Left cardiac atrium (tissue), 4 donors: ENCODE measurements at regions of chrX and their contacts with region 1.

Region 1: DNA sequence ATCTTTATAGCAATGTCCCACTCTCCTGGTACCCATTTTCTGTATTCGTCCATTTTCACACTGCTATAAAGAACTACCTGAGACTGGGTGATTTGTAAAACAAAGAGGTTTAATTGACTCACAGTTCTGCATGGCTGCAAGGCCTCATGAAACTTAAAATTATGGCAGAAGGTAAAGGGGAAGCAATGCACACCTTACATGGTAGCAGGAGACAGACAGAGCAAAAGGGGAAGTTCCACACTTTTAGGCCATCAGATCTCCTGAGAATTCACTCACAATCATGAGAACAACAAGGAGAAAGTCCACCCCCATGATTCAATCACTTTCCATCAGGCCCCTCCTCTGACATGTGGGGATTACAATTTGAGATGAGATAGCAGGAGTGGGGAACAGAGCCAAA is 49.7 kb downstream of the TMLHE start:
- DNase-seq: no peak
- ATAC-seq: no peak

Region 2: DNA sequence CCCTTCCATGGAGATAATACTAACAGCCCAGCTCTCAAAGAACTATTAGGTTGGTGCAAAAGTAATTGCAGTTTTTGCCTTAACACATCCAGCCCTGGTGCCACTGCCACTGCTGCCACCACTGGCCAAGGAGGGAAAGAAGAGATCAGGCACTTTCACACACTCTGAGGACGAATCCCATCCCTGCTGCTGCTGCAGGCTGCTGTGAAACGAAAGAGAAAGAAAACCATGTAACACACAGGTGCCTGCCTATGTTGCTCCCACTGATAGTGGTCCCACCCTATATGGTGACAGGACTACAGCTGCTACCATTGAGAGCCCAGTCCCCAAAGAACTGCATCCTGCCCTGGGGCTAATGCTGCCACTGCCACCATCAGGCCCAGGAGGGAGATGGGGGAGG is 14.6 kb after region 1 on chrX:
- intact Hi-C with region 1: loop called in 1 of 2 experiments (anchors 2 kb)
- DNase-seq: no peak
- ATAC-seq: no peak